Endothelial cell of umbilical vein (primary cell): ENCODE measurements at regions of chr20 and their contacts with region 1.

Region 1: GRCh38 chr20:32445539-32446273 is 87.6 kb downstream of the ASXL1 start:
- DNase-seq: no peak
- H3K4me3 ChIP-seq: no peak overlapping the region
- H3K27ac ChIP-seq: no peak overlapping the region
- H3K4me1 ChIP-seq: peaks cover 14% of the 10 kb centered on the region
- H3K27me3 ChIP-seq: no peaks in the 10 kb centered on the region
- CTCF ChIP-seq: no peak
- POLR2A ChIP-seq: no peak

Region 2: DNA sequence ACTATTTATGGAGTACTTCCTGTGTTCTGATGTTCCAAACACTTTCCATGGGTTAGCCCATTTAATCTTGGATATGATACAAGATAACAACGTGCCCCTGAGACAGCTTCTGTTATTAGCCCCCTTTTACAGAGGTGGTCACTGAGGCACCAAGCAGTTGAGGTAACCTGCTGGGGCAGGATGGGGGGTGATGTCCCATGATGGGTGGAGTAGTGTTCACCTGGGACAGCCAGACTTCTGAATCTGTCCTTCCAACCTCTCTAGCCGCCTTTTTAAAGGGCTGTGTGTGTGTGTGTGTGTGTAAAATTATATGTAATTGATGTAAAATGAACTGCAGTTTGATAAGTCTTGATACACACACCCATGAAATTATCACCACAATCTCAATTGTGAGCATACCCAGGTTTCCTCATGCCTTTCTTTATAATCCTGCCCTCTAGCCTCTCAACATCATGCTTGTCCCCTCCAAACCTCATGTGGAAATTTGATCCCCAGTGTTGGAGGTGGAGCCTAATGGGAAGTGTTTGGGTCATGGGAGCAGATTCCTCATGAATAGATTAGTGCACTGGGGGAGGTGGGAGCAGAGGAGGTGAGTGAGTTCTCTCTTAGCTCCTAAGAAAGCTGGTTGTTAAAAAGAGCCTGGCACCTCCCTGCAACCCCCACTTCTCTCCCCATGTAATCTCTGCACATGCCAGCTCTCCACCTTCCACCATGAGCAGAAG is 277.4 kb before region 1 on chr20:
- CTCF ChIA-PET with region 1: no interaction called
- POLR2A ChIA-PET with region 1: no interaction called
- dilution Hi-C with region 1: no loop called
- intact Hi-C with region 1: loop called (anchors 10 kb)
- DNase-seq: peak; percentile 30
- H3K4me3 ChIP-seq: no peak overlapping the region
- H3K27ac ChIP-seq: no peak overlapping the region
- H3K4me1 ChIP-seq: no peaks in the 10 kb centered on the region
- H3K27me3 ChIP-seq: no peaks in the 10 kb centered on the region
- CTCF ChIP-seq: no peak
- POLR2A ChIP-seq: no peak

Region 3: GRCh38 chr20:32779500-32780211 is 333.9 kb after region 1 on chr20:
- CTCF ChIA-PET with region 1: no interaction called
- POLR2A ChIA-PET with region 1: no interaction called
- dilution Hi-C with region 1: no loop called
- intact Hi-C with region 1: no loop called
- DNase-seq: no peak
- H3K4me3 ChIP-seq: no peak overlapping the region
- H3K27ac ChIP-seq: no peak overlapping the region
- H3K4me1 ChIP-seq: no peaks in the 10 kb centered on the region
- H3K27me3 ChIP-seq: no peaks in the 10 kb centered on the region
- CTCF ChIP-seq: no peak
- POLR2A ChIP-seq: no peak